BJ (cell line): ENCODE measurements at regions of chr11 and their contacts with region 1.

Region 1: GRCh38 chr11:93686812-93687211 is 25.3 kb downstream of the CEP295 start:
- DNase-seq: peak; percentile 29
- H3K4me3 ChIP-seq: no peak overlapping the region
- H3K27me3 ChIP-seq: no peaks in the 10 kb centered on the region
- CTCF ChIP-seq: no peak

Region 2: DNA sequence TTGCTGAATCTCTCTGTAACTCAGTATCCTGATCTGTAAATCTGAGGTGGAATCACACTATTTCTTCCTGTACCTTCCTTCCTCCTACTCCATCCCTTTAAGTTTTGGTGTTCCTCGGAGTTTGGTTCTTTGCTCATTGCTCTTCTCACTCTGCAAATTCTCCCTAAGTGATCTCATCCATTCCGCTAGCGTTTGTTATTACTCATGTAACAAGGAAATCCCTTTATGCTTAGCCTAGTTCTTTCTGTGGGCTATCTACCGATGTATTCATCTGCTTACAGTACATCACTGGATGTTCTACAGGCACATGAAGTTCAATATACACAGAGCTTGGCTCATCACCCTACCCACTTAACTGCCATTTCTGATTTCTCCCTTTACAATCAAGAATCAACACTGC is 27.0 kb before region 1 on chr11:
- CTCF ChIA-PET with region 1: no interaction called
- POLR2A ChIA-PET with region 1: no interaction called
- DNase-seq: no peak
- H3K4me3 ChIP-seq: no peak overlapping the region
- H3K27me3 ChIP-seq: peaks cover 2% of the 10 kb centered on the region
- CTCF ChIP-seq: no peak

Region 3: DNA sequence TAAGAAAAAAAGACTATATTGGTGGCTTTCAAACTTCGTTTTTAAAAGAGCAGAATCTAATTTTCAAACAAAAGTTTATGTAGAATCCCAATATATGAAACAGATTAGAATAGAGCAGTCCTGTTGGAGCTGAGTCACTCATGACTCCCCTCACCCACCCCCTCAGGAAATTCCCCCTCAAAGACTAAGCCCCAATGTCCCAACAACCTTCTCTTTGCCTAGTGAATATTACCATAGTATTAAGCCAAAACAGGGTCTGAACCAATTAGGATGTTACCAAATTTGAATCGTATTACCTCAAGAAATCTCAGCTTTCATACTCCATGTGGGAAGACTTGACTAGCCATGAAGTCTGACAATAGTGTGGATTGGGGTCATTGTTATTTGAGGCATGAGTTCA is 872.5 kb after region 1 on chr11:
- CTCF ChIA-PET with region 1: no interaction called
- POLR2A ChIA-PET with region 1: interaction called, 11 read pairs
- DNase-seq: no peak
- H3K4me3 ChIP-seq: no peak overlapping the region
- H3K27me3 ChIP-seq: no peaks in the 10 kb centered on the region
- CTCF ChIP-seq: no peak